ENCODE measurements at regions of chr15 and their contacts with region 1.

Region 1: DNA sequence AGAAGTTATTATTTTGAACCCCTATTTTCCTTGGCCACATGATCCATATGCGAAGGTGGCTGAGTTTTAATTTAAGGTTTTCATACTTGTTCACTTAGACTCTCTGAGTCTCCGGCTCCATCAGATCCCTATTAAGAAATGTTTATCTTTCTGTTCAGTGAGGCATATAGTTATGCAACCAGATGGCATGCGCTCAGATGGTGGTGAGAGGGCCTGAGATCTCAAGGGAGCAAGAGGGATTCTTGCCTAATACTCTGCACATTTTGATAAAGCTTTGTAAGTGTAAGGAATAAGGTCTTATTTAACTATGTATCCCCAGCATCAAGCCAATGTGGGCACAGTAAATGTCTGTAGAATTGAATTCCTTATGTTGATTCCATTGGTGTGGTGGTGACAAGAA is 78.9 kb upstream of the DPH6 start:
- DNase-seq: peak in 1 of 2 donors; percentile 62
- ATAC-seq: peak; percentile 86
- H3K4me3 ChIP-seq: no peak overlapping the region
- H3K27ac ChIP-seq: no peak overlapping the region
- H3K4me1 ChIP-seq: peaks cover 5 to 9% of the 10 kb centered on the region in 2 donors
- H3K27me3 ChIP-seq: no peaks in the 10 kb centered on the region

Region 2: GRCh38 chr15:35560870-35561269 is 64.0 kb before region 1 on chr15:
- intact Hi-C with region 1: loop called in 1 of 2 experiments (anchors 5 kb)
- DNase-seq: no peak
- ATAC-seq: no peak
- H3K4me3 ChIP-seq: no peak overlapping the region
- H3K27ac ChIP-seq: no peak overlapping the region
- H3K4me1 ChIP-seq: peaks cover 5% of the 10 kb centered on the region in 2 donors
- H3K27me3 ChIP-seq: no peaks in the 10 kb centered on the region

Region 3: GRCh38 chr15:35674873-35675781 is 50.2 kb after region 1 on chr15:
- intact Hi-C with region 1: loop called in 1 of 2 experiments (anchors 5 kb)
- DNase-seq: no peak
- ATAC-seq: no peak
- H3K4me3 ChIP-seq: no peak overlapping the region
- H3K27ac ChIP-seq: no peak overlapping the region
- H3K4me1 ChIP-seq: no peaks in the 10 kb centered on the region
- H3K27me3 ChIP-seq: no peaks in the 10 kb centered on the region

Region 4: DNA sequence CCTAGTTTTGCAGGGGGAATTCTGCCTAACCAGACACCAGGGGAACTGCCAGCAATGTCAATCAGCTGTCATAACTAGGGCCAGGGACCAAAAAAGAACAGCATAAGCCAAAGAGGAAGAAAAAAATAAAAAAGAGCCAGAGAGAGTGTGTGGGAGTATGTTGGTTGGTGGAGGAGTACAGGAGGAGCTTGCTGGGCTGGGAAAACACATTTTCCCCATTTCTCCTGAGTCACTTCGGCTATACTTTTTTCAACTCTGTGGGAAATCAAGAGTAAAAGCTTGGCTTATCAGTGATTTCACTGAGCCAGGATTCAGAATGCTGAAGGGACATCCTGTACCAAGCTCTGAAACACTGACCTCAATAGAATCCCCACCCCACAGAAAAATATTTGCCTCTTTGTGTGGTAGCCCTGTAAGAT is 65.8 kb after region 1 on chr15:
- intact Hi-C with region 1: no loop called
- DNase-seq: no peak
- ATAC-seq: peak; percentile 95
- H3K4me3 ChIP-seq: peak overlapping the region in 1 of 2 donors; percentile 26
- H3K27ac ChIP-seq: peak overlapping the region; percentile 93 to 95
- H3K4me1 ChIP-seq: no peaks in the 10 kb centered on the region
- H3K27me3 ChIP-seq: no peaks in the 10 kb centered on the region

Region 5: GRCh38 chr15:35713733-35714132 is 88.9 kb after region 1 on chr15:
- intact Hi-C with region 1: no loop called
- DNase-seq: no peak
- ATAC-seq: no peak
- H3K4me3 ChIP-seq: no peak overlapping the region
- H3K27ac ChIP-seq: no peak overlapping the region
- H3K4me1 ChIP-seq: no peaks in the 10 kb centered on the region
- H3K27me3 ChIP-seq: no peaks in the 10 kb centered on the region

Measured in aorta (tissue), 5 donors.